Activated CD4-positive, alpha-beta T cell treated with anti-CD3 and anti-CD28 coated beads for 36 hours (primary cell): ENCODE measurements at regions of chr5 and their contacts with region 1.

Region 1: DNA sequence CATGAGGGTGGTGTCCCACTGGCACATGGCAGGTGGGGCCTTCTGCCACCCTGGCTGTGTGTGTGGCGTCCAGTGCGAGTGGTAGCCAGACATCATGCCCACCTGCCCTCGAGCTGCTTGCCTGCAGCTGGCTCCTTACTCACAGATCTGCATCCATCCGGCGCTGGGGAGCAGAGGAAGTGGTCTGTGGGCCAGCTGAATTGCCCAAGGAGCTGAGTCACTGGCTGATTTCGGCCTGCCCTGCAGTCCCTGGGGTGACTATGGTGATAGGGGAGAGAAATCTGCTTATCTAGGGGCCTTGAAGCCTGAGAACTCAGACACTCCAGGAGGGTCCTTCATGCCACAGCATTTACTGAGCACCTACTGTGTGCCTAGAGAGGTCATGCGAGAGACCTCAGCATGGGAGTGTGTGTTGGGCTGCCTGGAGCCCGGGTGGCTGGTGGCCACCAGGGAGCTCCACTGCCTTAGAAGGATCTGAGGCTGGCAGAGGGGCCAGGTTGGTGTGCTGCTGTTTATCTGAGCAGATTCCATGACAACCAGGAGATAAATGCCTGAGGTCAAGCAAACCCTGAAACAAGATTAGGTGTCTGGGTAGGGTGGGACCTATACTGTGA is 57.1 kb downstream of the SLC22A5 start:
- DNase-seq: peak; percentile 84
- ATAC-seq: peak; percentile 46
- H3K4me3 Mint-ChIP-seq: peak overlapping the region; percentile 56
- H3K27ac Mint-ChIP-seq: peak overlapping the region; percentile 94
- H3K4me1 Mint-ChIP-seq: peaks cover 96% of the 10 kb centered on the region
- H3K27me3 Mint-ChIP-seq: no peaks in the 10 kb centered on the region

Region 2: GRCh38 chr5:132386644-132387286 is 39.9 kb before region 1 on chr5:
- CTCF ChIA-PET with region 1: interaction called, 7 read pairs
- POLR2A ChIA-PET with region 1: no interaction called
- intact Hi-C with region 1: loop called in 1 of 2 experiments (anchors 1 kb)
- DNase-seq: peak; percentile 88
- ATAC-seq: peak; percentile 87
- H3K4me3 Mint-ChIP-seq: no peak overlapping the region
- H3K27ac Mint-ChIP-seq: peak overlapping the region; percentile 29
- H3K4me1 Mint-ChIP-seq: peaks cover 40% of the 10 kb centered on the region
- H3K27me3 Mint-ChIP-seq: no peaks in the 10 kb centered on the region

Region 3: DNA sequence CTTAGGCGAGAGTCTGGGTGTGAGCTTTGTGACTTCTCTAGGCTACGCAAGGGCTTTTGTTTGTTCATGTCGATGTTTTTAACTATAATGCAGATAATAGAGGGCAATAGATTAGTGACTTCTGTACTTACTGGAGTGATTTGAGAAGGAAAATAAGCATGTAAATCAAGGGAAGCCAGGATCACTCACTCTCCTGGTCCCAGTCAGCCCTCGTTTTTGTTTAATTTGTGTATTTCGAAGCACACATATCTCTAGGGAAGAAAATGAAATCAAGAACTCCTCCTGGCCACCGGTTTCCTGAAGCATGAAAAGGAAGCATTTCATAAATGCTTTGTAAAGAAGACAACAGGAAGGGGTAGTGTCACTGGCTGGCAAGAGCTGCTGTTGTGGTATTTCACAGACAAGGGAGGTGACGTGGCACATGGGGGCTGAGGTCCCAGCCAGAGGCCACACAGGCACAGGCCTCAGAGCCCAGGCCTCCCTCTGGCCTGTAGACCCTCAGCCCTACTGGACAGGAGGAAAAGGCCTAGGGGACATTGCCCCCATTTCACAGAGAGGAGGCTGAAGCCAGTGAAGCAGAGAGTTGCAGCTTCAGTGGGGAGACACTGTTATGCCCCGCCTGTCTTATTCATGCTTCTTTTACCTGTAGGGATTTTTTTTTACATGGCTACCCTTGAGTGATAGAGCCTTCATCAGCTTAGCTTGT is 29.8 kb after region 1 on chr5:
- CTCF ChIA-PET with region 1: interaction called, 89 read pairs
- POLR2A ChIA-PET with region 1: interaction called, 4 read pairs
- intact Hi-C with region 1: loop called (anchors 1 kb)
- DNase-seq: peak; percentile 79
- ATAC-seq: peak; percentile 68
- H3K4me3 Mint-ChIP-seq: peak overlapping the region; percentile 49
- H3K27ac Mint-ChIP-seq: peak overlapping the region; percentile 96
- H3K4me1 Mint-ChIP-seq: peaks cover 90% of the 10 kb centered on the region
- H3K27me3 Mint-ChIP-seq: no peaks in the 10 kb centered on the region

Region 4: GRCh38 chr5:132473019-132473531 is 46.4 kb after region 1 on chr5:
- CTCF ChIA-PET with region 1: interaction called, 24 read pairs
- POLR2A ChIA-PET with region 1: interaction called, 95 read pairs
- intact Hi-C with region 1: no loop called
- DNase-seq: peak; percentile 83
- ATAC-seq: peak; percentile 94
- H3K4me3 Mint-ChIP-seq: no peak overlapping the region
- H3K27ac Mint-ChIP-seq: peak overlapping the region; percentile 93
- H3K4me1 Mint-ChIP-seq: peaks cover 59% of the 10 kb centered on the region
- H3K27me3 Mint-ChIP-seq: no peaks in the 10 kb centered on the region

Region 5: DNA sequence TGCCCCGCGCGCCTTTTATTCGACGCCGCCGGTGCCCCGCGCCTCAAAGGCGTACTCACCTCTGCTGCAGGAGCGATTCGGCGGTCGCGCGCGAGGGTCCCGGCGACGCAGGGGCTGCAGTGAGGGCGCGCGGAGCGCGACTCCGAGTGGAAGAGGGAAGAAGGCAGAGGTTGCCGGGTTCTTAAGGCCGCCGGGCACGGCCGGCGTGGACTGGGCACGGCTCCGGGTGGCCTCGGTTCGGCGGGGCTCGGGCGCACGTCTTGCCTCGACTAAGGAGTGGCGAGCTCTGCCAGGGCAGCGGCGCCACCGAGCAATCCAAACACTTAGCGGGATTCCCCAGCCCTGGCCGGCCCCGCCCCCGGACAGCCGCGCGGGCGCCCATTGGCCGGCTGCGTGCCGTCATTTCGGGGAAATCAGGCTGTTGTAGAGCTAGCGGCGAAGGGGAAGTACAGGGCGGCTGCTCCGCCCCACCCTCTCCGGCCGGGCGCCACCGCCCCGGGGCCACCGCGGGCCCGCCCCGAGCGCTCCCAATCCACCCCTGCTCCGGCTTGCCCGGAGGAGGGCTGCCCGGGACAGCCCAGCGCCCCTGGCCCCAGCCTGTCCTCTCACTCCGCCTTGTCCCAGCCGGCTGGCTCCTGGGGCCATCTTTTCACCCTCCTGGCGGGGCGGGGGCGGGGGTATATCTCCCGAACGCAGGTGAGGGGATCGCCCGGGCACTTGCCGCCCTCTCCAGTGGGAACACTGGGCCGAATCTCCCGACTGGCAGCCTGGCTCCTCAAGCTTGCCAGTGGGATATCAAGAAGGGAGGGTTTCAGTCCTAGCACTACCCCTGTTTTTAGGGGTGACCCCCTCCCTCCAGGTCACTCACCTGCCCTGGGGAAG is 64.1 kb after region 1 on chr5 and contains the start of gene IRF1:
- CTCF ChIA-PET with region 1: interaction called, 4 read pairs
- POLR2A ChIA-PET with region 1: interaction called, 130 read pairs
- intact Hi-C with region 1: loop called (anchors 1 kb)
- DNase-seq: peak; percentile 99
- ATAC-seq: peak; percentile 67
- H3K4me3 Mint-ChIP-seq: peak within 1 kb of the TSS; percentile 96
- H3K27ac Mint-ChIP-seq: peak within 1 kb of the TSS; percentile 97
- H3K4me1 Mint-ChIP-seq: peaks cover 69% of the 10 kb centered on the region
- H3K27me3 Mint-ChIP-seq: no peaks in the 10 kb centered on the region
- total RNA-seq, gene IRF1: 121 to 130 TPM

Region 6: GRCh38 chr5:132500931-132501630 is 74.4 kb after region 1 on chr5:
- CTCF ChIA-PET with region 1: interaction called, 35 read pairs
- POLR2A ChIA-PET with region 1: interaction called, 36 read pairs
- intact Hi-C with region 1: loop called in 1 of 2 experiments (anchors 1 kb)
- DNase-seq: peak; percentile 85
- ATAC-seq: peak; percentile 34
- H3K4me3 Mint-ChIP-seq: no peak overlapping the region
- H3K27ac Mint-ChIP-seq: no peak overlapping the region
- H3K4me1 Mint-ChIP-seq: peaks cover 22% of the 10 kb centered on the region
- H3K27me3 Mint-ChIP-seq: no peaks in the 10 kb centered on the region